Endothelial cell of umbilical vein (primary cell): ENCODE measurements at regions of chr5 and their contacts with region 1.

Region 1: GRCh38 chr5:154308443-154309370 is 118.2 kb downstream of the GALNT10 start:
- DNase-seq: peak; percentile 45
- H3K4me3 ChIP-seq: no peak overlapping the region
- H3K27ac ChIP-seq: peak overlapping the region; percentile 72
- H3K4me1 ChIP-seq: peaks cover 37% of the 10 kb centered on the region
- H3K27me3 ChIP-seq: no peaks in the 10 kb centered on the region
- CTCF ChIP-seq: no peak
- POLR2A ChIP-seq: no peak

Region 2: DNA sequence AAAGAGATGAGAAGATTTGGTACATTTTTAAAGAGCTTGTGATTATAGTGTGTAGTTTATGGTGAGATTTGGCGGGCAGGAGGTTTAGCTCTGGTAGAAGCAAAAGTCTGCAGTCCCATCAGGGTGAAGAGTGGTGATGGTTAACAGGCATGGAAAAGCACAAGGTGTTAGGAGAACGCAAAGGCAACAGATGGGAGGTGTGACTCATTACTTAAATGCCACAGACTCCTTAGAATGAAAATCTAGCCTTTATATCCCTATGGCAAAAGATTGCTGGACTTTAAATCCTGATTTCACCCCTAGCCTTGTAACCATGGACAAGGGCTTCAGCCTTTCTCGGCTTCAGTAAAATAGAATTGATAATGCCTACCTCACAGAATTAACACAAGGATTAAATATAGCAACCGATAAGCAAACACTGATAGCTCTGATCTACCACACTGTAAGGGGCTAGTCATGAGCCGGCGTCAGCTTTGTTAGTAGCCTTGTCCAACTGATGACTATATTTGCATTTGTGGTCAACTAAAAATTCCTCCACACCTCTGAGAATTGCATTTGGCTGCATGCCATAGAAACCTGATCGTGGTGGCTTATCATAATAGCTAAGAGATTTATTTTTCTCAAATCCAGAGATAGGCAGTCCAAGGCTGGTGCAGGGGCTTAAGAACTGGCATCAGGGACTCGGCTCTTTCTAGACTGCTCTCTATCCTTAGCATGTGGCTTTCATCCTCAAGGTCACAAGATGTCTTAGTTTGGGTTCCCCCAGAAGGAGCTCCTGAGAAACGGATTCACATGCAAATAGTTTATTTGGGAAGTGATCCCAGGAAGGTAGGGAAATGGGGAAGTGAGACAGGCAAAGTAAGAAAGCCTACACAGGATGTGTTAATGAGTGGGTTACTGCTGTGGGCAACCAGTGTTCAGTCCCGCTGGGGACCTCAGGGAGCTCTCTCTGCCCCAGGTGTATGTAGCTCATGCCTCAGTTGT is 250.4 kb before region 1 on chr5:
- CTCF ChIA-PET with region 1: no interaction called
- POLR2A ChIA-PET with region 1: no interaction called
- dilution Hi-C with region 1: no loop called
- intact Hi-C with region 1: no loop called
- DNase-seq: no peak
- H3K4me3 ChIP-seq: no peak overlapping the region
- H3K27ac ChIP-seq: no peak overlapping the region
- H3K4me1 ChIP-seq: no peaks in the 10 kb centered on the region
- H3K27me3 ChIP-seq: no peaks in the 10 kb centered on the region
- CTCF ChIP-seq: no peak
- POLR2A ChIP-seq: no peak

Region 3: DNA sequence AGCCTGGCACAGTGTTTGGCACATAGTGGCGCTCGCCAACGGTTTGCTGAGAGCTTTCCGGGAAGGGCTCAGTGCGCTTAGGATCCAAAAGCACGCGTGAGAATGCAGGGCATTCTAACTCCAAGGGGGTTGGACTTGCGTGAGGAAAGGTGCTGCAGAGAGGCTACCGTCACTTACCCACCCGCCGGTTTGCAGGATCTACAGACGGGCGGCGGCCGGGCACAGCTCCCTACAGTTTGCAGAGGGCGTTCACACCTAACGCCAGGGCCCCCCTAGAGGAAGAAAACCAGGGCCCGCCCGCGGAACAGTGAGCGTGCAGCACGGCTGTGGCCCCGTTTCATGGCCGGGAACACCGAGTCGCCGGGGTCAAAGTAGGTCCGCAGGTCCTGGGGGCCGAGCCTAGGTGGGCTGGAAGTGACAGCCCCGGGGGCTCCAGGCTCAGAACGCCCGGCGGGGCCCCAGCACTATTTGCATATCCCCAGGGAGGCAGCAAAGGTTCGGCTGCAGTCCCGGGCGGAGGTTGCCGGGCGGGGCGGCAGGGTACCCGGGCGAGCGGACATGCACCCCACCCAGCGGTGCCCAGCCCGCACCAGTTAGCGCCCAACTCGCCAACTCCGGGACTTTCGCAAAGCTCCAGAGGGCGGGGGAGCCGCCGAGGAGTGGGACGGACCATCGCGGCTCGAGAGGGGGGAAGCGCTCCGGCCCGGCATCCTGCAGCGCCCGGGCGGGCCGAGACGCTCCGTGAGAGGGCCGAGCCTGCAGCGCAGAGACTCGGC is 118.7 kb before region 1 on chr5:
- CTCF ChIA-PET with region 1: no interaction called
- POLR2A ChIA-PET with region 1: interaction called, 4 read pairs
- dilution Hi-C with region 1: no loop called
- intact Hi-C with region 1: loop called (anchors 5 kb)
- DNase-seq: peak; percentile 55
- H3K4me3 ChIP-seq: peak overlapping the region; percentile 51 to 80 (median 56)
- H3K27ac ChIP-seq: peak overlapping the region; percentile 61
- H3K4me1 ChIP-seq: peaks cover 19% of the 10 kb centered on the region
- H3K27me3 ChIP-seq: no peaks in the 10 kb centered on the region
- CTCF ChIP-seq: peak; percentile 49 to 69
- POLR2A ChIP-seq: peak; percentile 56